ENCODE measurements at regions of chr10 and their contacts with region 1.

Region 1: DNA sequence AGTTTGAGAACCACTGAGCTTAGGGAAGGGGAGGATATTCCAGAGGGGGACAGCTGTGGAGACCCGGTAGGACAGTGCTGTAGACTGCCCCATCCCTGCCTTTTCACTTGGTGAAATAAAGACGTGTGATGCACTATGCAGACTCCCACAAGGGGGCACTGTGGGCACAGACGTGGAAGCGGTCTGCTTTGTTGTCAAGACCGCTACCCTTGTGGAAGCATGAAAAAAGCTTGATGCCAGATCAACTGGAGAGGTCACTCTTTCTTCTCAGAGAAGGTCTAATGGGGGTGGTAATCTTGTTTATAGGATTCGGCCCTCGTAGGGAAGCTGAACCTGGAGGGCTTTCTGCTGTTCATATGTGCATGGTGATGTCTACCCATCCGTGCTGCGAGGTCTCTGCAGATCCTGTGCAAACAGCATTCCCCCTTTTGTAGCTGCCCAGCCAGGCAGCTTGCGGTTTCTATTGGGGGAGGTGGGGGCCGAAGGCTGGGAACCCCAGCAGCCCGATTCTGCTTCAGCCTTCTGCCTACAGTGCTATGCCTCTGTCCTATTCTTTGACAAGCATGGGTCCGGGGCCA is 13.7 kb downstream of the RPS24 start:
- DNase-seq: peak; percentile 86
- H3K4me3 ChIP-seq: no peak overlapping the region
- H3K27ac ChIP-seq: no peak overlapping the region
- H3K4me1 ChIP-seq: peaks cover 6% of the 10 kb centered on the region
- H3K27me3 ChIP-seq: no peaks in the 10 kb centered on the region
- CTCF ChIP-seq: peak; percentile 88 to 89
- POLR2A ChIP-seq: no peak

Region 2: DNA sequence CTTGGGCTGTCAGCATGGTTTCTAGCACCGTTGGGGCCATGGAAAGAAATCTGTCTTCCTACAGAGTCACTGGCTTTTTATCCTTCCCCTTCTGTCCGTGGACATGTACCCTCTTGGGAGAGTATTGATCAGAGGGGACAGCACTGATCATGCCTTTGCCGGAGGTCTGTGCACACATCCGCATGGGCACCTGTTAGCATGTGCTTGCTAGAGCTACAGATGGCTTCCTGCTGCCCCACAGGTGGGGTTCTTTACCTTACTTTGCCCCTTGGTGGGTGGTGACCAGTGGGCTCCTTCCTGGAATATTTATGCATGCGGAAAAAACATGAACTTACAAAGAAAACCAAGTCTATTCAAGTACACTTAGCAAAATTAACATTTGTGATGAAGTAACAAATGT is 11.2 kb after region 1 on chr10:
- CTCF ChIA-PET with region 1: interaction called, 19 read pairs
- POLR2A ChIA-PET with region 1: no interaction called
- dilution Hi-C with region 1: no loop called
- intact Hi-C with region 1: no loop called
- DNase-seq: no peak
- H3K4me3 ChIP-seq: no peak overlapping the region
- H3K27ac ChIP-seq: no peak overlapping the region
- H3K4me1 ChIP-seq: peaks cover under 1% of the 10 kb centered on the region
- H3K27me3 ChIP-seq: no peaks in the 10 kb centered on the region
- CTCF ChIP-seq: no peak
- POLR2A ChIP-seq: no peak

Region 3: DNA sequence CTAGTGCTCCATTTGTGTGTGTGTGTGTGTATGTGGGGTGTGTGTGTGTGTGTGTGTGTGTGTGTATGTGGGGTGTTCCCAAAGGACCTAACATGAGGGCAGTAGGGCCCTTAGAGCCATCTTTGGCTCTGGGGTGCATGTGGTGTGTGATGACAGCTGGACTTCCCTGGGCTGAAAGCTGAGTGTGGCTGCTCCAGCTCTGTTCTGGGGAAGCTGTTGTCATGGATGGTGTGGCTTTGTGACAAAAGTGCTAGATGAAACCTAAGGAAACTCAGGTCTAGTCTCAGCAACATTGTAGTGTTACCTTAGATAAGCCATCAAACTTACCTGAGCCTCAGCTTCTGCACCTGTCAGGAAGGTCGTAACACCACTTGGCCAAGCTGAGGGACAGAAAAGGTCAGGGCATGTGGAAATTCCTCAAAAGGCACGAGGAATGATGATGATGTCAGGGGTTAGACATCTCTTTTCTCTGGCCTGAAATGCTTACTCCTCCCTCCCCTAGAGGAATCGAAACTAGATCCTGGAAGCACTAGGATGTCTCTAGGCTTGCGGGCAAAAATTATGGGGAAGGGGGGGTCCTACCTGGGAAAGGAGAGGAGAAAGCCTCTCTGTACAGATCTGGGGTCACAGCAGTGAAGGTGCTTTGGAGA is 101.7 kb after region 1 on chr10:
- CTCF ChIA-PET with region 1: no interaction called
- POLR2A ChIA-PET with region 1: no interaction called
- dilution Hi-C with region 1: no loop called
- intact Hi-C with region 1: no loop called
- DNase-seq: no peak
- H3K4me3 ChIP-seq: no peak overlapping the region
- H3K27ac ChIP-seq: no peak overlapping the region
- H3K4me1 ChIP-seq: no peaks in the 10 kb centered on the region
- H3K27me3 ChIP-seq: peaks cover 2 to 3% of the 10 kb centered on the region in 2 experiments
- CTCF ChIP-seq: no peak
- POLR2A ChIP-seq: no peak

Region 4: DNA sequence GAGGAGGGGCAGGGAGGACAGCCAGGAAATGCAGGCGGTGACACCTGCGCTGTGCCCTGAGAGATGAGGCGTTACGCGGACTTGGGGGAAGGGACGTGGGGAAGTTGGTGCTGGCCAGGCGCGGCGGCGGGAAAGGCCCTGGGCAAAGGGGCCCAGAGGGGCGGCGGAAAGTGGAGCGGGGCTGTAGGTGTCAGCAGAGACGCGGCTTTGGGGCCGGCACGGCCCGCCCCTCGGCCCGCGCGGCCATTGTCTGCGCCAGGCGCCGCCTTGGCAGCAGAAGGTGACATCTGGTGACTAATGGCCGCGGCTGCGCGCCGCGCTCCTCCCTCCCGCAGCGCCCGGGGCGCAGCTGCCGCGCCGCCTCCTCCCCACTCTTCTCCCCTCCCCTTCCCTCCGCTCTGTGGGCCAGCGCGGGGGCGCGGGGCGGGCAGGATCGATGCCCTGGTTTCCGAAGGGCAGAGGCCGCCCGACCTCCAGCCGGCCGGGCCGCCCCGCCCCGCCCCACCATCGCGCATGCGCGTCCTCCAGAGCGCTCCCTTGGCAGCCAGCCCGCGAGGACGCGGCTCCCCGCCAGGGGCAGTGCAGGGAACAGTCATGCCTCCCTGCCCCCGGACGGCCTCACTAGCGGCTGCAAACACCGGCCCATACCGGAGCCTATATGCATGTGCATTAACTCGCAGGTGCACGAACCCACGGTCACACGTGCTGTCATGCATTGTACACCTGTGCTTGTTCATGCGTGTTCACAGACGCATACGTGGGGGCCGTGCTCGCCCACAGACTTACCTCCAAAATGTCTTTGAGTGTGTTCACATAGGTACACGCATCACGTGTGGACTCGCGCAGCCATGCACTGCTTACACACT is 255.8 kb after region 1 on chr10:
- CTCF ChIA-PET with region 1: interaction called, 4 read pairs
- POLR2A ChIA-PET with region 1: no interaction called
- dilution Hi-C with region 1: no loop called
- intact Hi-C with region 1: loop called (anchors 5 kb)
- DNase-seq: peak; percentile 97
- H3K4me3 ChIP-seq: peak overlapping the region; percentile 31 to 59 (median 44)
- H3K27ac ChIP-seq: peak overlapping the region; percentile 76
- H3K4me1 ChIP-seq: peaks cover 7% of the 10 kb centered on the region
- H3K27me3 ChIP-seq: peaks cover 8 to 11% of the 10 kb centered on the region in 2 experiments
- CTCF ChIP-seq: peak; percentile 69 to 87
- POLR2A ChIP-seq: peak; percentile 67

Region 5: DNA sequence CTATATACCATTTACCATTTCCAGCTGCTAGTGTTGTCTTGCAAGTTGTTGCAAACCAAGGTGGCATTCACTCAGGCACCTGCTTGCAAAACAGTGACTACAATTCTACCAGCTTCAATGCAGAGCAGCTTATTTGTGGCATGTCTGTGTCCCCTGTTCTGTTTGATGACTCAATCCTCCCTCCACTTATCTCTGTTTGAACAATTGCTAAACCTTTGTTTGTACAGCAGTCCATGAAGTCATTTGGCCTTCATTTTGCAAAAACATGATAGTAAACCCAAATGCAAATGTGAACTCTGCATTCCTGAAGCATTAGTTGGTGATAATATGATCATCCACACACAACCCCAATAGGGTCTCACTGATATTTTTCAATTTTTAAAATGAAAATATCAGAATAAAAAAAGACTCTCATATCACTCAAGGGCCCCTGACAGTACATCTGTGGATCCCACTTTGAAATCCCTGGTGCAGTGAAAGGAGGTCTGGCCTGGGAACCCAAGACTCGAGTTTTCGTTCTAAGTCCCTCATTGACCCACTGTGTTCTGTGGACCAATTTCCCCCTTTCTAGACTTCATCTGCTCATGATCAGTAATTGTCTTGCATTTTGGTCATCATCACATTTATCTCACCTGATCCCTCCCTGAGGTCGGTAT is 411.7 kb after region 1 on chr10:
- CTCF ChIA-PET with region 1: interaction called, 4 read pairs
- POLR2A ChIA-PET with region 1: no interaction called
- dilution Hi-C with region 1: no loop called
- intact Hi-C with region 1: loop called (anchors 5 kb)
- DNase-seq: peak; percentile 98
- H3K4me3 ChIP-seq: no peak overlapping the region
- H3K27ac ChIP-seq: peak overlapping the region; percentile 99
- H3K4me1 ChIP-seq: peaks cover 43% of the 10 kb centered on the region
- H3K27me3 ChIP-seq: no peaks in the 10 kb centered on the region
- CTCF ChIP-seq: no peak
- POLR2A ChIP-seq: peak; percentile 87

Region 6: GRCh38 chr10:78657163-78657861 is 609.9 kb after region 1 on chr10:
- CTCF ChIA-PET with region 1: interaction called, 68 read pairs
- POLR2A ChIA-PET with region 1: no interaction called
- dilution Hi-C with region 1: no loop called
- intact Hi-C with region 1: loop called (anchors 1 kb)
- DNase-seq: peak; percentile 50
- H3K4me3 ChIP-seq: no peak overlapping the region
- H3K27ac ChIP-seq: no peak overlapping the region
- H3K4me1 ChIP-seq: peaks cover 4% of the 10 kb centered on the region
- H3K27me3 ChIP-seq: peaks cover 17% of the 10 kb centered on the region in 2 experiments
- CTCF ChIP-seq: peak; percentile 61 to 92
- POLR2A ChIP-seq: no peak